ENCODE measurements at regions of chr4 and their contacts with region 1.

Region 1: DNA sequence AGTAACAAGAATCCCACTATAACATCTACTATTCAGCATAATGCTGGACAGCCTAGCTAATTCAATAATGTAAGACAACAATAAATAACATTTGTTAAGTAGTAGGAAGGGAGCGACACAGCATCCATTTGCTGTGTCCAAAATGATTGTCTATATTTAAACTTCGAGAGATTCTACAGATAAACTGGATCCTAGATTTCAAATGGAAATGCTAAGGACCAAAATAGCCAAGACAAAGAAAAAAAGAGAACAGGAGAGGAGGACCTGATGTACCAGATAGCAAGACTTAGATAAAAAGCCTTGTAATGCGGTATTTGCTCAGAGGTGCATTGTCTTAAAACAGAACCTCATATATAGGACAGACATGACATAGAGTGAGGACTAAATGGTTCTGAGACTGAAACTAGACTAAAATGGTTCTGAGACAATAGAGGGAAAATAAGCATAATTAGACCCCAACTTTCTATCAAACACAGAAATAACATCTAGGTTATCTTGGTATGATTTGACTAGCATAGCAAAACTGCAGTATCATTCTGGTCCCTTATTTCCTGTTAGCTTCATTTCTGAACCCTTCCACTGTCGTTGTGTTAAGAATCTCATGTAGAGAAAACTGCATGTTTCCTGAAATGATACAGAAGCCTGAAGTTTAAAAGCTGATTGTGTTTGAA is 3.8 kb downstream of the HPGDS start:
- DNase-seq: no peak
- H3K4me3 ChIP-seq: no peak overlapping the region
- H3K27ac ChIP-seq: no peak overlapping the region
- H3K4me1 ChIP-seq: no peaks in the 10 kb centered on the region
- H3K27me3 ChIP-seq: no peaks in the 10 kb centered on the region
- CTCF ChIP-seq: no peak
- POLR2A ChIP-seq: no peak

Region 2: DNA sequence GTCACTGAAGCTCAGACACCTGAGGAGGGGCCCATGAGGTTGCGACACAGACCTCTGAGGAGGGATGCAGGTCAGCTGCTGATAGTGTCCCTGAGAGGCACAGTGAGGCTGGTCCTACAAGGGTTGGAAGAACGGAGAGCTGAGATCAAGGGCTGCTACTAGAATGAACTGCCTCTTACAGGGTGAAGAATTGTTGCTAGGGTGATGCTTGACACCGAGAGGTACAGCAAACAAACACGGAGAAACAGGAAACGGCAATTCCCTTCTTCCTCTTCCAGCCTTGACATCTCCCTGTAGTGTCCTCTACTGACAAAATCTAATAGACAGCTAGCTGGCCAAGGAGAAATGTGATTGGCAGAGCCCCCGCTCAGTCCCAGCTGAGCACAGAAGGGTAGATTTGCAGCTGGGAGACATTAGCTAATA is 15.7 kb after region 1 on chr4:
- CTCF ChIA-PET with region 1: interaction called, 8 read pairs
- POLR2A ChIA-PET with region 1: no interaction called
- dilution Hi-C with region 1: no loop called
- intact Hi-C with region 1: loop called (anchors 2 kb)
- DNase-seq: no peak
- H3K4me3 ChIP-seq: no peak overlapping the region
- H3K27ac ChIP-seq: no peak overlapping the region
- H3K4me1 ChIP-seq: peaks cover 10% of the 10 kb centered on the region
- H3K27me3 ChIP-seq: no peaks in the 10 kb centered on the region
- CTCF ChIP-seq: no peak
- POLR2A ChIP-seq: no peak

Measured in endothelial cell of umbilical vein (primary cell).